Activated CD4-positive, alpha-beta T cell treated with anti-CD3 and anti-CD28 coated beads, Interleukin-2, amount 10 ng/mL, durations not matched to agents 24 days and 14 days (primary cell): ENCODE measurements at regions of chr1 and their contacts with region 1.

Region 1: GRCh38 chr1:165914136-165914798 is 86.9 kb downstream of the UCK2 start:
- DNase-seq: peak; percentile 93
- H3K4me3 Mint-ChIP-seq: no peak overlapping the region
- H3K27ac Mint-ChIP-seq: no peak overlapping the region
- H3K4me1 Mint-ChIP-seq: peaks cover 5% of the 10 kb centered on the region
- H3K27me3 Mint-ChIP-seq: no peaks in the 10 kb centered on the region

Region 2: DNA sequence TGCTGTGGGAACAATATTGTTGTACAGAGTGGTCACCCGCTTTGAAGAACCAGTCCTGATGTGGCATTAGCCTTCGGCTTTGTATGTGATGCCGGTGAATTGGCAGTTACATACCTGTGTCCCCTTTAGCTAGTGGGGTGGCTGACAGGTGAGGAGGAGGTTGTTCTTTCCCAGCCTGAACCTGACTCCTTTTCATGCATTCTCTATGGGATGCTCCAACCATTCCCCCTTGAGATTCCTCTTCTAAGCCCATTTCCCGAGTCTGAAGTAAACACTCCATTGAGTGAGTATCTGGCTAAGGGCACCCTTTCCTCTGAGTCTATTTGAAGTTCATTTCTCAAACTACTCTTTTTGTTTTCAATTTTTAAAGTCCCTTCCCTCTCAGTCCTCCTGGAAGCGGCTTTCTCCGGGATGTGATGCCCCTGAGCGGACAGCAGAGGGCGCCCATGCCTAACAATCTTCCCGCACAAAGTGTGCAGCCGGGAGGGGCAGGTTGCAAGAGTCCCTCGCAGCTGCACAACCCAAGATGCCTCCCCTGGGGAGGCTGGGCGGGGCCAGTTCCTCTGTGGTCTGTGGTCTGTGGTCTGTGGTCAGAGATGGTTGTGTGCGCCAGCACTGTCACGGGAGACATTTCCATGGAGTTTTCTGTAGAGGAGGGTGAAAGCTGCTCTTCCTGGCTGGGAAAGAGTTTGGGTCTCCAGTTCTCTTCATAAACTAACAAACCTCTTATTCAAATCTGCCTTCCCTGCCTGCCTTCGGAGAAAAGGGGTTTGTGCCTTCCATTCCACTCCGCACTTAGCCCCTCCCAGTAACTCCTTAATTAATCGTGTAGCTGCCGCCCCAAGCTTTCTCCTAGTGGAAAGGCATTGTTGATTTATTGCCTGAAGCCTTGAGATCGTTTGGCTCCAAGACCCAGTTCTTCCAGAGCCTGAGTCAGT is 521.4 kb before region 1 on chr1:
- intact Hi-C with region 1: loop called (anchors 1 kb)
- DNase-seq: peak; percentile 98
- H3K4me3 Mint-ChIP-seq: peak overlapping the region; percentile 74
- H3K27ac Mint-ChIP-seq: peak overlapping the region; percentile 93
- H3K4me1 Mint-ChIP-seq: peaks cover 13% of the 10 kb centered on the region
- H3K27me3 Mint-ChIP-seq: peaks cover 90% of the 10 kb centered on the region

Region 3: GRCh38 chr1:165717918-165718515 is 196.2 kb before region 1 on chr1:
- intact Hi-C with region 1: loop called (anchors 1 kb)
- DNase-seq: peak; percentile 82
- H3K4me3 Mint-ChIP-seq: no peak overlapping the region
- H3K27ac Mint-ChIP-seq: no peak overlapping the region
- H3K4me1 Mint-ChIP-seq: no peaks in the 10 kb centered on the region
- H3K27me3 Mint-ChIP-seq: peaks cover 7% of the 10 kb centered on the region

Region 4: GRCh38 chr1:165768513-165769394 is 145.5 kb before region 1 on chr1 and contains the start of gene TMCO1:
- intact Hi-C with region 1: loop called (anchors 2 kb)
- DNase-seq: peak; percentile 98
- H3K4me3 Mint-ChIP-seq: peak within 1 kb of the TSS; percentile 98
- H3K27ac Mint-ChIP-seq: peak within 1 kb of the TSS; percentile 100
- H3K4me1 Mint-ChIP-seq: peaks cover 41% of the 10 kb centered on the region
- H3K27me3 Mint-ChIP-seq: no peaks in the 10 kb centered on the region
- total RNA-seq, gene TMCO1: 91.8 and 94.3 TPM in 2 replicates

Region 5: GRCh38 chr1:165898837-165899236 is 15.4 kb before region 1 on chr1:
- intact Hi-C with region 1: no loop called
- DNase-seq: no peak
- H3K4me3 Mint-ChIP-seq: no peak overlapping the region
- H3K27ac Mint-ChIP-seq: no peak overlapping the region
- H3K4me1 Mint-ChIP-seq: peaks cover 17% of the 10 kb centered on the region
- H3K27me3 Mint-ChIP-seq: no peaks in the 10 kb centered on the region